ENCODE measurements at regions of chr5 and their contacts with region 1.

Region 1: GRCh38 chr5:168734620-168735300 is 155.6 kb upstream of the PANK3 start:
- DNase-seq: peak; percentile 79
- ATAC-seq: peak; percentile 83 to 85

Region 2: GRCh38 chr5:168579488-168580226 is 155.1 kb before region 1 on chr5:
- intact Hi-C with region 1: no loop called
- DNase-seq: peak; percentile 99
- ATAC-seq: peak; percentile 97 to 99

Region 3: DNA sequence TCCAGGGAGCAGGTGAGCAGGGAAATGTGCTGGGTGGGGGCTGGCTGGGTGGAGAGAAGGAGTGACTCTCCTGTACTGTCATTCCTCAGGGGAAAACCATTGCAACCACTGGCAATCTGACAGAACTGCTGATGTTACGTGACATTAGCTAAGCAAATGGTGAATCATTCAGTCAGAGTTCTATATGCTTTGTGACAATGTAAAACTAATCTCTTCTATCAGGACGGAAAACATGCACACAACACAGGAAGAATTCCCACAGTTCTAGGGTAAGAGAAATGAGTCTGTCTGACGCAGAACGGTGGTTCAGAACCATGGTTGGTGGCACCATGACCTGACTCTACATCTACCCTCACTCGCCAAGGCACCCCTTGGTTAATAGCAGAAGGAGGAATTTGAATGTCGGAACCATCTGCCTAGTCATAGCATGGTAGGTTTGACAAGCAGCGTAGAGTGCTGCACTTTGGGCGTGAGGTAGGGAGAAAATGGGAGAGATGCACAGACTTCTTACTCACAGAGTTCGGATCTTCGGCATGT is 88.1 kb after region 1 on chr5:
- intact Hi-C with region 1: no loop called
- DNase-seq: no peak
- ATAC-seq: peak in 1 of 2 donors; percentile 14

Region 4: GRCh38 chr5:168879929-168880328 is 145.2 kb after region 1 on chr5:
- intact Hi-C with region 1: loop called in 1 of 2 experiments (anchors 5 kb)
- DNase-seq: peak; percentile 25
- ATAC-seq: peak; percentile 58 to 65